ENCODE measurements at regions of chr19 and their contacts with region 1.

Region 1: DNA sequence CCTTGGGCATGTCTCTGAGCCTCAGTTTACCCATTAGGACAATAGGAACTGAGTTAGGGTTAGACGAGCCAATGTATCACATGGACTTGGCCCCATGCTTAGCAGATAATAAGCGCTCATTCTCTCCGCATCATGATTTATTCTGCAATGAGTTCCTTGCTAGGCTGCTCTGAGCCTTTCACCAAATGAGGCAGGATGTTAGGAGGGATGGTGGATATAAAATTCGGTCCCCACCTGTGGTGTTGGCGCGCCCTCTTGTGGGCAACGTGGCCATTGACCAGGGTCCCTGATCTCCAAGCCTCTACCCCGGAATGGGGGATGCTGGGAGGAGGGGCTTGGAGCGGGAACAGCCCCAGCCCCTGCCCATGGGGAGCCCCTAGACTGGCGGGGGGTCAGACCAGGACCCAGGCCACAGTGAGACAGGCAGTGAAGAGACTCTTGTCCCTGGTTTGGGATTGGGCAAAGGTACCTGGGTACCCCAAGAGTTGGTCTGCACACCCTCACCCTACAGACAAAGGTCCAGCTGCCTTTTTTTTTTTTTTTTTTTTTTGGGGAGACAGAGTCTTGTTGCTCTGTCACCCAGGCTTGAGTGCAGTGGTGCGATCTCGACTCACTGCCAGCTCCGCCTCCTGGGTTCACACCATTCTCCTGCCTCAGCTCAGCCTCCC is 43.9 kb downstream of the CERS4 start:
- DNase-seq: peak; percentile 89

Region 2: GRCh38 chr19:7845390-7846154 is 407.5 kb before region 1 on chr19:
- in situ Hi-C with region 1: no loop called
- DNase-seq: no peak

Region 3: DNA sequence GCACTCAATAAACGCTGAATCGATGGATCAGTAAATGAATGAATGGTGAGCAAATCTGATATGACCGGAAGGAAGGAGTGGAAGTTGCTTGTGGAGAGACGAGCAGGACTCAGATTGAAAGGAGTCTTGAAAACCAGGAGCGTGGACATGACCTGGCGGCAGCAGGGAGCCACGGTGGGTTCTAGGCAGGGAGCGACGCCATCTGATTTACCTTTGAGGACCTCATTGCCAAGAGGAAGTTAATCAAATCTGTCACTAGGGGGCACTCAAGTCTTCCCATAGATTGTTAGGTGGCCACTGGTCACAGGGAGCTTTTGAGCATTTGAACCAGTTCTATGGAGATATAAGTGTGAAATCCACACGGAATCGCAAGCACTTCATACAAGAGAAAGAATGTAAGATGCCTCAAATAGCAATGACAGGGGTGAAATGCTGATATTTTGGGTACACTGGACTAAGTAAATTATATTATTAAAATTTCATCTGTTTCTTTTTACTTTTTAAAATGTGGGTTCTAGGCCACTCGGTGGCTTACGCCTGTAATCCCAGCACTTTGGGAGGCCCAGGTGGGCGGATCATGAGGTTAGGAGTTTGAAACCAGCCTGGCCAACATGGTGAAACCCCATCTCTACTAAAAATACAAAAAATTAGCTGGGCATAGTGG is 94.5 kb before region 1 on chr19:
- in situ Hi-C with region 1: loop called (anchors 25 kb)
- DNase-seq: peak; percentile 83

Region 4: GRCh38 chr19:8180061-8180460 is 73.0 kb before region 1 on chr19:
- in situ Hi-C with region 1: no loop called
- DNase-seq: no peak

Region 5: DNA sequence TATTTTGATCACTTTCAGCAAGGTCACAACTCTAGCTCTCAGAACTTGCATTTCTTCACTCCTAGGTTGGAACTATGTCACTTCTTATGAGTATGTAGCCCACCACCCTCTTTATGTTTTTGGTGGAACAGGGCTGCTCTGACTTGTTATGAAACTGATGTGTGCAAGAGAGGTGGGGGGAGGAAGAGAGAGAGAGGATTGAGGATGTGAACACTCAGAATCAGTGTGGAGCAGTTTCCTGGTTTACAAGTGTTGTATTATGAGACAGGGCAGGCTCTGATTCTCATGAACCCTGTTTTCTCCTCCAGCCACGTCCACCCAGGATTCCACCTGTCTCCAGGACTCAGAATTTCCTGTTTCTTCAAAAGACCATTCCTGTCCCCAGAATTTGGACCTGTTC is 903.2 kb after region 1 on chr19:
- in situ Hi-C with region 1: no loop called
- DNase-seq: no peak

Measured in KBM-7 (cell line).